HEK293T (cell line): ENCODE measurements at regions of chr10 and their contacts with region 1.

Region 1: GRCh38 chr10:110901954-110902819 is 16.8 kb downstream of the BBIP1 start:
- DNase-seq: no peak

Region 2: DNA sequence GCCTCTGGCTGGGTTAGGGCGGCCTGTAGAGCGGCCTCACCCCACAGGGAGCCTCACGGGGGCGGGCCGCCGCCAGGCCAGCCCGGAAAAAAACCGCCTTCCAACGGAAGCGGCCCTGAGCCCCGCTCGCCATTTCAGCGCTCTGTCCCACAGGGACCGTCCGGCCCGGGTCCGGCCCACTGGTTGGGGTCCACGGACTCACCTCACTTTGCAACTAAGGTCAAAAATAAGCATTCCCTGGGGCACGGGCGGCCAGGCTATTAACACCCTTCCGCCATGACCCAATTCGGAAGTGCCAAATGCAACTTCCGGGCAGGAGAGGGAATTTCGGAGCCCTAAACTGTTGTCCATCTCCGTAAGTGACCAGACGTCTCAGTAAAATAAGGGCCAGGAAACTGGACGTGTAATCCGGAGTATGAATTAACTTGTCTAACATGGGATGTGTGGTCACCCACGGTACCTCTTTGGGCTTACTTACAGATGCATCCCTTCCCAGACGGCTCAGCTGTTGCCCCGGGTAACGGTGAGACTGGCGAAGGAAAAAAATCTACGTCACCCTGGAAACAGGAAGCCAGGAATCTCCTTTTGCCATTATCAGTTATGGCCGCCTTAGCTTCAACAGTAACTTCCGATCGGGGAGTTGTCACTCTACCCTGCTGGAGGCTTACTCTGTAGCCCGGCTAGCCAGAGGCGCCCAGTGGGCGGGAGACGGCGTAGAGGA is 16.6 kb after region 1 on chr10 and contains the start of gene BBIP1:
- CTCF ChIA-PET with region 1: no interaction called
- POLR2A ChIA-PET with region 1: interaction called, 13 read pairs
- DNase-seq: peak; percentile 93